T-cell (primary cell): ENCODE measurements at regions of chr1 and their contacts with region 1.

Region 1: DNA sequence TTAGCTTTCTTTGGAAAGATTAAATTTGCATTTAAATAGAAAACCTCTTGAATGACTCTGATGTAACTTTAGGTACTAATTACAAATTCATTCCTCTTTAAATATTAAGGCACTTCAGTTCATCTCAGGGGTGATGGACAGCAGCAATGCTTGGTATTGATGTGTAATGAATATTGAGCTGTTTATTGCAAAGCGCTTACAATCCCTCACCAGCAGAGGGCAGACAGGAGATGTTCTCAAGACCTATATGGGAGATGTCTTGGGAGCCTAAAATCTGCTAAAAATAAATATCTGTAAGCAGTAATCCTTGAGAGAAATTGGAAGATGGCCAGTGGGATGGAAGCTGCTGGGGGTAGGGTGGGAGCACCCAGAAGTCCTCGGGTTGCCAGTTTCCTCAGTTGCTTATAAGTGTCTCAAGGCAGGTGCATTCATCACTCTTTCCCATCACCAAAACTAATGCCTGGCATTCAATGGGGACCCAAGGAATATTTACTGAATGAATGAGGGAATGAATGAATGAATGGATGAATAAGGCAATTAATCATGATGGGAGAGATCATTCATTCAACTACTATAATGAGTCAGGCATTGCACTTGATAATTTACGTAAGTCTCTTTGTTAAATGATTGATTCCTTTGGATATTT is 2.3 kb downstream of the KLHDC8A start:
- DNase-seq: peak in 34 of 35 experiments; percentile 12 to 83 (median 55)
- ATAC-seq: peak in 3 of 4 experiments; percentile 69 to 72 (median 69)
- H3K4me3 ChIP-seq: no peak overlapping the region
- H3K4me3 Mint-ChIP-seq: no peak overlapping the region
- H3K27ac ChIP-seq: no peak overlapping the region
- H3K27ac Mint-ChIP-seq: no peak overlapping the region
- H3K4me1 ChIP-seq: no peaks in the 10 kb centered on the region
- H3K4me1 Mint-ChIP-seq: peaks cover 0 to 2% (median 0%) of the 10 kb centered on the region in 3 donors
- H3K27me3 ChIP-seq: peaks cover 0 to 30% of the 10 kb centered on the region in 2 experiments
- H3K27me3 Mint-ChIP-seq: peaks cover 11 to 26% of the 10 kb centered on the region in 2 donors

Region 2: DNA sequence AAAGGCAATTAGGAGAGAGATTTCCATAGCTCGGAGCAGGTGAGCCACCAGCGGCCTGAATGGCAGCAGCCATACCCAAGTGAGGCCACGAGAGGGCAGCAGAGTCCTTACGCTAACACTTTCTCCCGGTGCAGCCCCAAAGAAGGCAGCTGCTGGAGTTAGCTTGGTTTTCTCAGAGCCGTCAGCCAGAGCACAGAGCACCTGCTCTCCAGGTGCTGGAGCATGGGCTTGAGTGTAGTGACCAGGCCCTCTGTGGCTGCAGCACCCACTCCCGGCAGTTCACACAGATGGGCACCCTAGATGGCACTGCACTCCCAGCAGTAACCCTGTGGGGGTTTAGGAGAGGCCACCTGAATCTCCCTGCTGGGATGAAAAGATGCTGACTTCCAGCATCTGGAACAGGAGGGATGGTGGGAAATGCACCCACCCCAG is 80.8 kb before region 1 on chr1:
- CTCF ChIA-PET with region 1: interaction called, 4 to 19 read pairs
- POLR2A ChIA-PET with region 1: interaction called in 1 of 2 experiments, 3 read pairs
- DNase-seq: peak; percentile 66 to 92 (median 83)
- ATAC-seq: peak; percentile 74 to 84 (median 77)
- H3K4me3 ChIP-seq: peak overlapping the region in 1 of 2 donors; percentile 12
- H3K4me3 Mint-ChIP-seq: peak overlapping the region; percentile 39 to 65 (median 53)
- H3K27ac ChIP-seq: no peak overlapping the region
- H3K27ac Mint-ChIP-seq: peak overlapping the region; percentile 78 to 86
- H3K4me1 ChIP-seq: peaks cover 28 to 49% of the 10 kb centered on the region in 2 experiments
- H3K4me1 Mint-ChIP-seq: peaks cover 45 to 47% (median 47%) of the 10 kb centered on the region in 3 donors
- H3K27me3 ChIP-seq: peaks cover 0 to 12% of the 10 kb centered on the region in 2 experiments
- H3K27me3 Mint-ChIP-seq: no peaks in the 10 kb centered on the region

Region 3: GRCh38 chr1:205365945-205366463 is 11.6 kb after region 1 on chr1:
- CTCF ChIA-PET with region 1: interaction called in 1 of 2 experiments, 15 read pairs
- POLR2A ChIA-PET with region 1: interaction called in 1 of 2 experiments, 3 read pairs
- DNase-seq: no peak
- ATAC-seq: no peak
- H3K4me3 ChIP-seq: no peak overlapping the region
- H3K4me3 Mint-ChIP-seq: no peak overlapping the region
- H3K27ac ChIP-seq: no peak overlapping the region
- H3K27ac Mint-ChIP-seq: no peak overlapping the region
- H3K4me1 ChIP-seq: no peaks in the 10 kb centered on the region
- H3K4me1 Mint-ChIP-seq: no peaks in the 10 kb centered on the region
- H3K27me3 ChIP-seq: peaks cover 0 to 17% of the 10 kb centered on the region in 2 experiments
- H3K27me3 Mint-ChIP-seq: peaks cover 3 to 14% of the 10 kb centered on the region in 2 donors

Region 4: DNA sequence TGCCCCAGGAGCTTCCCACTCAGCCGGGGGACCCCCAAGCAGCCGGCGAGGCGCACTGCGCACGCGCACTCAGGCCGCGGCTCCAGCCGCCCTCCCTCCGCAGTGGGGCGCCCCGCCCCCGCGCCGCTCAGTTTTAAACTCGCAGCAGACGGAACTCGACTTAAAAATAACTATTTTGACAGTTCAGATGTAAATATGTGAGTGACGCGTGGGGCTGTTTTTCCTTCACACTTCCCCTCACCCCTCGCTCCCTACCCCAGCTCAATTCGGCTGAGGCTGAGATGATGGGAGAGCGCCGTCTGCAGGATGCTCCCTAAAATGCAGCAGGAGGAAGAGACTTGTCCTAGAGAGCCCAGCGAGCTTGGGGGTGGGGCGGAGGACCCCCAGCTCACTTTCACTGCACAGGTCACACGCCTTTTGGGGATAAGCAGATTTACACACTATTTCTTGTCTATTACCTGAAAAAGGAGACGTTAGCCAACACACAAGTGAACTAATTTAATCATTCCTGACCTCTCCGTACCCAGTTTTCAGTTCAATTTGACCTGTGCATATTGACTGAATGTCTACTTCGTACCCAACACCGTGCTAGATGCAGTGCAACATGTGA is 76.4 kb after region 1 on chr1:
- CTCF ChIA-PET with region 1: interaction called in 1 of 2 experiments, 12 read pairs
- POLR2A ChIA-PET with region 1: no interaction called
- DNase-seq: peak; percentile 16 to 69 (median 53)
- ATAC-seq: peak; percentile 60 to 89 (median 75)
- H3K4me3 ChIP-seq: peak overlapping the region; percentile 35 to 56
- H3K4me3 Mint-ChIP-seq: peak overlapping the region; percentile 72 to 79 (median 78)
- H3K27ac ChIP-seq: no peak overlapping the region
- H3K27ac Mint-ChIP-seq: no peak overlapping the region
- H3K4me1 ChIP-seq: peaks cover 2 to 9% of the 10 kb centered on the region in 2 experiments
- H3K4me1 Mint-ChIP-seq: peaks cover 10 to 14% (median 12%) of the 10 kb centered on the region in 3 donors
- H3K27me3 ChIP-seq: peaks cover 0 to 18% of the 10 kb centered on the region in 2 experiments
- H3K27me3 Mint-ChIP-seq: peaks cover 15 to 21% of the 10 kb centered on the region in 2 donors

Region 5: DNA sequence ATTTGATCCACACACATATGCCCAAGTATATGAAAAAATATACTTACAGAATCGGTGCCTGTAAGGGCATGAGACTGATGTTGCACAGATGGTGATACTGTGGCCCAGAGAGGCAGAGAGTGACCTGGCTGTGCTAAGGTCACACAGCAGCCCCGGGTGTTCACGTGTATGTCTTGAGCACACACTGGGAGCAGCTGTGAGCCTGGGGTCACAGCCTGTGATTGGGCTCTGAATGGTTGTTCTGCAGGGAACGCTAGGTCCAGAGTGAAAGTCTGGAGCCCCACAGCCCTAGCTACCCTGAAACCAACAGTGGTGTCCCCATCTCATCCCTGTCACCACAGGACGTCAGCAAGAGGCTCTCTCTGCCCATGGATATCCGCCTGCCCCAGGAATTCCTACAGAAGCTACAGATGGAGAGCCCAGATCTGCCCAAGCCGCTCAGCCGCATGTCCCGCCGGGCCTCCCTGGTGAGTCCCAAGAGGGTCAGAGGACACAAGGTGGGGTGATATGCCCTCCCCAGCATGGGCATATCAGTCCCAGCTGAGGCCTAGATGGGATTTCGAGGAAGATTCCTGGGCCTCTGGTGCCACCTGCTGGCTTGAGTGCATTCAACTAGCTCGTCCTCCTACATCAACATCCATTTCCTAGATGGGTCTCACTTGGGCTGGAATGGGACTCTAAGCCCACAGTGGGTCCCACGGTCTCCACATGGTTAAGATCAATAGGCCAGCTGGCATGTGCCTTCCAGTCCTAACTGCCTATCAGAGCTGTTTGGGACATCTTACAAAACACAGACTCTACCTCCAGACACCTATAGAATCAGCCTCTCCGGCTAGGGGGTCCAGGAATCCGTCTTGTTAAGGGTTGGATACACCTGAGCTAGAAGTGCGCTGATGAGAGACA is 169.8 kb after region 1 on chr1:
- CTCF ChIA-PET with region 1: interaction called, 6 to 47 read pairs
- POLR2A ChIA-PET with region 1: no interaction called
- DNase-seq: peak; percentile 26 to 83 (median 65)
- ATAC-seq: peak; percentile 46 to 62 (median 52)
- H3K4me3 ChIP-seq: no peak overlapping the region
- H3K4me3 Mint-ChIP-seq: no peak overlapping the region
- H3K27ac ChIP-seq: no peak overlapping the region
- H3K27ac Mint-ChIP-seq: no peak overlapping the region
- H3K4me1 ChIP-seq: peaks cover 0 to 6% of the 10 kb centered on the region in 2 experiments
- H3K4me1 Mint-ChIP-seq: no peaks in the 10 kb centered on the region
- H3K27me3 ChIP-seq: peaks cover 0 to 24% of the 10 kb centered on the region in 2 experiments
- H3K27me3 Mint-ChIP-seq: peaks cover 4 to 8% of the 10 kb centered on the region in 2 donors